Activated T-helper 2 cell treated with anti-CD3 and anti-CD28 coated beads, Interferon-gamma antibody, Interleukin-2, Interleukin-4, amounts not matched to agents 10 μg/mL and 5 μg/mL and 100 μg/mL, durations not matched to agents 14 hours and 24 hours and 36 hours (primary cell): ENCODE measurements at regions of chr1 and their contacts with region 1.

Region 1: DNA sequence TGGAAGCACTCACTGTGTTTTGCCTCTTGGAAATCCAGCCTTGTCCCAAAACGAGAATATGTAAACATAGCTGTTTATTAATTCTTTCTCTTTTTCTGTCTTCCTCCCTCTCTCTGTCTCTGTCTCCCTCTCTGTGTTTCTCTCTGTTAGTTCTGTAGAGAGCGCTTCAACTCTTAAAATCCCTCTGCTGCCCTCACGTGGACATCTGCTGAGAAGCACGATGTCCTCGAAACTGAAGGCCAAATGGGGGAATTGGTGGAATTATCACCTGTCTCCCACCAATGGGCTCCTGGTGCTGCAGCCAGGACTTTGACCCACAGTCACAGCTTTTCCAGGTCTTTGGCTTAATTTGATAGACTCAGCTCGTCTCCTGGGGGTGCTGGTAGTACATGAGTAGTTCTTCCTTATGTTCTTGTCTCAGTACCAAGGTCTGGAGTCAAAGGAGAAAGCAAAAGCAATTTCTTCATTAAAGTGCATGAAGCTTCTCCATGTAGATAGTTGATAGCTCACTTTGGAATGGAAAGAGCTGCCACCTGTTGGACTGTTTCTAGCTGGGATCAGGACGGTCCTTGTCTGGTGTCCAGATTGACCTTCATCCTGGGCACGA is 5.5 kb upstream of the GBP6 start:
- DNase-seq: peak; percentile 73
- H3K4me3 Mint-ChIP-seq: no peak overlapping the region
- H3K27ac Mint-ChIP-seq: peak overlapping the region; percentile 7
- H3K4me1 Mint-ChIP-seq: peaks cover 45% of the 10 kb centered on the region
- H3K27me3 Mint-ChIP-seq: peaks cover 12% of the 10 kb centered on the region

Region 2: GRCh38 chr1:89085781-89086180 is 272.6 kb before region 1 on chr1:
- intact Hi-C with region 1: loop called (anchors 1 kb)
- DNase-seq: peak; percentile 51
- H3K4me3 Mint-ChIP-seq: no peak overlapping the region
- H3K27ac Mint-ChIP-seq: no peak overlapping the region
- H3K4me1 Mint-ChIP-seq: peaks cover 14% of the 10 kb centered on the region
- H3K27me3 Mint-ChIP-seq: peaks cover 8% of the 10 kb centered on the region

Region 3: DNA sequence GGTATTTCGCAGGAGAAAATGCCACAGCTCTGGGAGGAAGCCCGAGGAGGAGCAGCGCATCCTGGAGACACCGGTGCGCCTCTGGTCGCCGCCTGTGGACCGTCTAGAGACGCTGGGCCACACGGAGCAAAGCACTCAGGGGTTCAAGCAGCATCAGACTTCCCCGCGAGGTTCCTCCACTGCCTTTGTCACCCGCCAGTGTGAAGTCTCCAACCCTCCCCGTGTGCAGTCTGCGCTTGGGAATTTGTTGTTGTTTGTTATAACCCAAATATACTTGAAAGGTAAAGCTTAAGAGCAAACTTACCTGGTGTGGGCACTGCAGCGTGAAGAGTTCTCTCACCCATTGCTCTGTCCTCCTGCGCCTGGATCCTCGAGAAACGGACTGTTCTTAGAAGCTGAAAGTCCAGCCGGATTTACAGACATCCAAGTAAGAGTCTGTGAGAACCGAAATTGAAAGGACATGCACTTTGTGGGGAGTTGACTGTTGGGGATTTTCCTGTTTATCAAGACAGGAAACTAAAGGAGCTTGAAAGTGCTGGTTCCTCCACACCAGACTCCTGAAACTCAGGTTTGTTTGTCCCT is 159.8 kb before region 1 on chr1 and contains the start of gene GBP4:
- intact Hi-C with region 1: loop called (anchors 2 kb)
- DNase-seq: peak; percentile 30
- H3K4me3 Mint-ChIP-seq: peak within 1 kb of the TSS; percentile 86
- H3K27ac Mint-ChIP-seq: peak within 1 kb of the TSS; percentile 93
- H3K4me1 Mint-ChIP-seq: peaks cover 79% of the 10 kb centered on the region
- H3K27me3 Mint-ChIP-seq: no peaks in the 10 kb centered on the region
- total RNA-seq, gene GBP4: 13.9 and 14.3 TPM in 2 replicates

Region 4: DNA sequence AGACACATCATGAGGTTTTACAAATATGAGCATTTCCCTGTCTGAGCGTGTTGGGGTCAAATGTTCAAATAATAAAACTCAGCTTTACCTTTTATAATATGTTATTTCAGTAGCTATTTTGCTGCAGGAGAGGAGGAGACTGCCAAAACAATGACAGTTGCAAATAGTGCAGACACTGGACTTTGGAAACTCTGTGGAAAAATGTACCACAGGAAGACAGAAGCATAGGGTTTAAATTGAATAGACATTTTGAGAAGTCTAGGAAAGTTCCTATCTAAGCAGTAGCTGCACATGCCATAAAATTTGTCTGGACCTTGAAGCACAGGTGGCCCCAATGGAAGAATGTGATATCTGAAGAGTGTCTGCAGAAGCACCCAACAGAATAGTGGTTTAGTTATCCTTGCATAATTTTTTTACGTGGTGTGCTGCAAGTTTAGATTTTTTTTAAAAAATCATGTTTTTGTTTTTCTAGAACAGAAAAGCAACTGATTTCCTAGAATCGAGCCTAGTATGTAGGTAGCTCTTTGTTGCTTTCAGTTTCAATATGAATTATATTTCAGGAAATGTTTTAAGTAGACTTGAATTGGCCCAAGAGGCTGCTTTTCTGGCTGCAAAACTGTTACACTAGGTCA is 71.7 kb before region 1 on chr1:
- intact Hi-C with region 1: loop called (anchors 5 kb)
- DNase-seq: no peak
- H3K4me3 Mint-ChIP-seq: peak overlapping the region; percentile 7
- H3K27ac Mint-ChIP-seq: peak overlapping the region; percentile 65
- H3K4me1 Mint-ChIP-seq: peaks cover 64% of the 10 kb centered on the region
- H3K27me3 Mint-ChIP-seq: no peaks in the 10 kb centered on the region